ENCODE measurements at regions of chr3 and their contacts with region 1.

Region 1: DNA sequence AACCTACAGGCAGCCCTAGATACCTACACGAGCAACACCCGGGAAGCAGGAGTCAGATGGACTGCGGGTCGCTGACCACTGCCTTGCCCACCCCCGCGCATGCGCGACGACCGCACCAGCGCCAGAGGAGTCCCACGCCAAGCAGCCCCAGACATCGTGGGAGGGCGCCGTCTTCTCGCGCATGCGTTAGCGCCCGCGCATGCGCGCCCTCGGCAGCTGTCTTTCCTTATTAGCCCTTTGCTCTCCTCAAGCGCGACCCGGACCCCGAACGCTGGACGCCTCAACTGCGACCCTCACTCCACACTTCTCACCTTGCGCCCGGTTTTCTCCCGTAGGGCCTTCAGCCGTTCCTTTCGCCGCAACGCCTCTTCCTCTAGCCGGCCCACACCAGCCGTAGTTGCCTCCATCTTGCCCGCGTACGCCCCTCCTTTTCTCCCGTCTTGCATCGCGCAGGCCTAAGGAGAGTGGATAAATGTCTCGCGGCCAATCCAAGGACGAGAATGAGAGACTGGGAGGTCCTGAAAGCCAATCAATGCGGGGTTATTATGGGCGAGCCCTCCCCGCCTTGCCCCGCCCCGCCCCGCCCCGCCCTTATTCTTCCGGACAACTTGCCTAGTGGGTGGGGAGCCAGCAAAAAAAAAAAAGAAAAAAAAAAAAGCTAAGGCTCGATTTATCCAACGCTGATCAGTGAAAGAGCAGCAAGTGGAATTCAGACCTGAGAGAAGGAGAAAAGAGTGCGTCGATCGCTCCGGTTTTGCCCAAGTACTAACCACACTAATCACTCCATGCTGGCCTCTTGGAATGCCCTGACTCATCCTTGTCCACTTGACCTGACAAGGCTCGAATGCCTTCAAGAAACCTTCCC is at the start of gene CCDC12:
- DNase-seq: peak; percentile 97 to 98 (median 98)
- H3K4me3 ChIP-seq: peak within 1 kb of the TSS; percentile 67 to 99
- H3K4me3 Mint-ChIP-seq: peak within 1 kb of the TSS; percentile 94 to 100 (median 100)
- H3K27ac ChIP-seq: peak within 1 kb of the TSS; percentile 89
- H3K27ac Mint-ChIP-seq: peak within 1 kb of the TSS; percentile 90 to 100 (median 99)
- H3K4me1 ChIP-seq: peaks cover 75% of the 10 kb centered on the region
- H3K4me1 Mint-ChIP-seq: peaks cover 45 to 78% (median 62%) of the 10 kb centered on the region in 4 donors
- H3K27me3 ChIP-seq: no peaks in the 10 kb centered on the region
- H3K27me3 Mint-ChIP-seq: no peaks in the 10 kb centered on the region
- total RNA-seq, gene CCDC12: 59.3 to 59.4 TPM

Region 2: DNA sequence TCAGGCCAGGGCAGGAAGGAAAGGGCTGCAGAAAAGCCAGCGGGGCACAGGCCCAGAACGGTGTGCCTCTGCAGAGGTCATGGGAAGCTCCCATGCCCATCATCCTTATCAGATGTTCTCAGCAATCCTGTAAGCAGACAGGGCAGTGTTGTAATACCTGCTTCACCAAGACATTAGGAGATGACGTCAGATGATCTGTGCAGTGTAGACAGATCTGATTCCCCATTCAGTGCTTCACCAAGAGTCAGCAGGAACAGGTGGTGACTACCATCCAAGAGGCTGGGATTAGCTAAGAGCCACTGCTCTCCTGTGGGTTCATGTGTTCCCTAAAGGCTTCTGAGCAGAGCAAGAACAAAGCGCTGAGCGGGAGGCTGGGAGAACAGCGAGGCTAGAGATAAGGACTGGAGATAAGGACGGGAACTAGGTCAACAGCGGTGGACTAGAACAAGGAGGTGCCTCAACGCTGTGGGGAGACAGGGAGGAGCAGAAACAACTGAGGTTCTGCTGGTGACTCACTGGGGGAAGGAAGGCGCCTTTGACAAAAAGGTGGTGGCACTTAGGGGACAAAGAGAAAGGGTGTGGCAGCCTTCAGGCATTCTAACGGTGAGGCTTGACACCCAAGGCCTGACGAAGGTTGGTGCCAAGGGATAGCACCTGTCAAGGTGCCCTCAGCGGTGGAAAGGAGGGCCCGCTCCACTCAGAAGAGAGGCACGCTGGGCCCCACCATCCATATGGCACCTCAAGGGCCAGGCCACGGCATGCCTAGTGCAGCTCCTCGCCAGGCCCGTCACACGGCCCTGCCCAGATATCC is 28.4 kb before region 1 on chr3:
- CTCF ChIA-PET with region 1: interaction called, 5 read pairs
- POLR2A ChIA-PET with region 1: interaction called, 116 read pairs
- intact Hi-C with region 1: loop called (anchors 1 kb)
- DNase-seq: peak; percentile 73 to 97 (median 83)
- H3K4me3 ChIP-seq: peak overlapping the region in 1 of 2 donors; percentile 13
- H3K4me3 Mint-ChIP-seq: peak overlapping the region; percentile 56 to 85 (median 78)
- H3K27ac ChIP-seq: peak overlapping the region; percentile 69
- H3K27ac Mint-ChIP-seq: peak overlapping the region; percentile 95 to 99 (median 97)
- H3K4me1 ChIP-seq: peaks cover 88% of the 10 kb centered on the region
- H3K4me1 Mint-ChIP-seq: peaks cover 70 to 94% (median 80%) of the 10 kb centered on the region in 4 donors
- H3K27me3 ChIP-seq: no peaks in the 10 kb centered on the region
- H3K27me3 Mint-ChIP-seq: no peaks in the 10 kb centered on the region

Region 3: DNA sequence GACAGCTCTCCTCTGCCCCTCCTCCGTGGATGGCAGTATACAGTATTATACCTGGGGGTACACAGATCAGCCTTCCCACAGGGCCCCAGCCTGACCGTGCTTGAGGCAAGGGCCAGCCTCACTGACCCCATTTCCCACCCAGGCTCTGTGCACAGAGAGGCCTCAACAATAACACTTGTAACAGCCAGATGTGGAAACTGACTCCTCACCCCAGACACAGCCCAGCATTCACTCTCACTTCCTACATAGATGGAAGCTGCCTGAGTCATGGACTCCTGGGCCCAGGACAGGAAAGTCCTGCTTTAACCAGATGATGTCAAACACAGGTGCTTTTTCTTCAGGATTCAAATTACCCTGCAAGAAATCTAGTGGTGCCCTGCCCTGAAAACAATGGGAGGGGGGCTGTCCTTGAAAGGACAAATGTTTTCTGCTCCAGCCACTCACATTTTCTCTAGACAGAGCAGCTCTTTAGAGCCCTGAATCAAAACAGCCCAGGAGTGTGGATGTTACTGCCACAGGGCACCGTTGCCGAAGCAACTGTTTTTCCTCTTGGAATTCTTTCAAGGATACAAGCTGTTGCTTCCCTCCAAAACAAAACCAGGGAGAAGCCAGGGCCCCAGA is 16.4 kb before region 1 on chr3:
- CTCF ChIA-PET with region 1: interaction called, 9 read pairs
- POLR2A ChIA-PET with region 1: interaction called, 18 read pairs
- intact Hi-C with region 1: no loop called
- DNase-seq: no peak
- H3K4me3 ChIP-seq: no peak overlapping the region
- H3K4me3 Mint-ChIP-seq: peak overlapping the region in 7 of 8 donors; percentile 29 to 79 (median 57)
- H3K27ac ChIP-seq: peak overlapping the region; percentile 24
- H3K27ac Mint-ChIP-seq: peak overlapping the region in 6 of 7 donors; percentile 7 to 92 (median 85)
- H3K4me1 ChIP-seq: peaks cover 74% of the 10 kb centered on the region
- H3K4me1 Mint-ChIP-seq: peaks cover 61 to 81% (median 70%) of the 10 kb centered on the region in 4 donors
- H3K27me3 ChIP-seq: no peaks in the 10 kb centered on the region
- H3K27me3 Mint-ChIP-seq: no peaks in the 10 kb centered on the region

Region 4: DNA sequence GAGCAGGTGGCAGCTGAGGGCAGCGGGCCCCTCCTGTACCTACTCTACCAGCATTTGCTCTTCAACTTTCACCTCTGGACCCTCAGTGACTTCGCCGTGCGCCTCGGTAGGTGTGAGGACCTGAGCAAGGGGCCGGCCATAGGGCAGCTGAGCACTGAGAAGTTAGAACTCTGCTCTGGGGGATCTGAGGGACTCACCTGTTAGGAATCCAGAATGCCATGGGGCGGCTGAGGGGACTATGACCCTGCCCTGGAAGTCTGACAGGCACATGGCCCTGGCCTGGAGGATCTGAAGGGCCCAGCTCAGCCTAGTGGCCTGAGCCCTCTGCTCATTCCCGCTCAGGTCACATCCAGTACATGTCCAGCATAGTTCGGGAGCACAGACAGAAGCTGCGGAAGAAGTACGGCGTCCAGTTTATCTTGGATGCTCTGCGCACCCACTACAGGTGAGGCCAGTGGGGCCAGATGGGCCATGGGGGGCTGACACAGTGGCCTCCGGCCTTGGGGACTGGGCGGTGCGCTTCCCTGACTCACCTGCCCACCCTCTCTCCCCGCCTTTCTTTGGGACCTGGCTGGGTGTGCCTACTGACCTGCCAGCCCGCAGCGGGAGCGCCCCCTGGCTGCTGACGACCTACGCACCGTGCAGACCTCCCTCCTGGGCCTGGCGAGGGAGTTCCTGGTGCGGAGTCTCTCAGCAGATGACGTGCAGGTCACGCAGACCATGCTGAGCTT is 21.7 kb after region 1 on chr3:
- CTCF ChIA-PET with region 1: interaction called, 28 read pairs
- POLR2A ChIA-PET with region 1: interaction called, 222 read pairs
- intact Hi-C with region 1: loop called (anchors 1 kb)
- DNase-seq: peak; percentile 65 to 73 (median 69)
- H3K4me3 ChIP-seq: no peak overlapping the region
- H3K4me3 Mint-ChIP-seq: no peak overlapping the region
- H3K27ac ChIP-seq: no peak overlapping the region
- H3K27ac Mint-ChIP-seq: peak overlapping the region; percentile 65 to 90 (median 85)
- H3K4me1 ChIP-seq: peaks cover 23% of the 10 kb centered on the region
- H3K4me1 Mint-ChIP-seq: peaks cover 11 to 29% (median 19%) of the 10 kb centered on the region in 4 donors
- H3K27me3 ChIP-seq: no peaks in the 10 kb centered on the region
- H3K27me3 Mint-ChIP-seq: no peaks in the 10 kb centered on the region

Region 5: GRCh38 chr3:47016934-47017435 is 40.4 kb after region 1 on chr3:
- CTCF ChIA-PET with region 1: no interaction called
- POLR2A ChIA-PET with region 1: no interaction called
- intact Hi-C with region 1: no loop called
- DNase-seq: peak in 3 of 5 donors; percentile 17 to 57 (median 18)
- H3K4me3 ChIP-seq: no peak overlapping the region
- H3K4me3 Mint-ChIP-seq: peak overlapping the region in 2 of 8 donors; percentile 5 to 30
- H3K27ac ChIP-seq: peak overlapping the region; percentile 26
- H3K27ac Mint-ChIP-seq: peak overlapping the region; percentile 73 to 91 (median 86)
- H3K4me1 ChIP-seq: peaks cover 21% of the 10 kb centered on the region
- H3K4me1 Mint-ChIP-seq: peaks cover 24 to 52% (median 31%) of the 10 kb centered on the region in 4 donors
- H3K27me3 ChIP-seq: no peaks in the 10 kb centered on the region
- H3K27me3 Mint-ChIP-seq: no peaks in the 10 kb centered on the region

Region 6: GRCh38 chr3:47057212-47057671 is 80.7 kb after region 1 on chr3:
- CTCF ChIA-PET with region 1: no interaction called
- POLR2A ChIA-PET with region 1: no interaction called
- intact Hi-C with region 1: loop called (anchors 5 kb)
- DNase-seq: peak; percentile 79 to 87 (median 83)
- H3K4me3 ChIP-seq: no peak overlapping the region
- H3K4me3 Mint-ChIP-seq: peak overlapping the region; percentile 21 to 75 (median 54)
- H3K27ac ChIP-seq: peak overlapping the region; percentile 50
- H3K27ac Mint-ChIP-seq: peak overlapping the region; percentile 85 to 97 (median 95)
- H3K4me1 ChIP-seq: peaks cover 32% of the 10 kb centered on the region
- H3K4me1 Mint-ChIP-seq: peaks cover 30 to 49% (median 38%) of the 10 kb centered on the region in 4 donors
- H3K27me3 ChIP-seq: no peaks in the 10 kb centered on the region
- H3K27me3 Mint-ChIP-seq: no peaks in the 10 kb centered on the region

Region 7: DNA sequence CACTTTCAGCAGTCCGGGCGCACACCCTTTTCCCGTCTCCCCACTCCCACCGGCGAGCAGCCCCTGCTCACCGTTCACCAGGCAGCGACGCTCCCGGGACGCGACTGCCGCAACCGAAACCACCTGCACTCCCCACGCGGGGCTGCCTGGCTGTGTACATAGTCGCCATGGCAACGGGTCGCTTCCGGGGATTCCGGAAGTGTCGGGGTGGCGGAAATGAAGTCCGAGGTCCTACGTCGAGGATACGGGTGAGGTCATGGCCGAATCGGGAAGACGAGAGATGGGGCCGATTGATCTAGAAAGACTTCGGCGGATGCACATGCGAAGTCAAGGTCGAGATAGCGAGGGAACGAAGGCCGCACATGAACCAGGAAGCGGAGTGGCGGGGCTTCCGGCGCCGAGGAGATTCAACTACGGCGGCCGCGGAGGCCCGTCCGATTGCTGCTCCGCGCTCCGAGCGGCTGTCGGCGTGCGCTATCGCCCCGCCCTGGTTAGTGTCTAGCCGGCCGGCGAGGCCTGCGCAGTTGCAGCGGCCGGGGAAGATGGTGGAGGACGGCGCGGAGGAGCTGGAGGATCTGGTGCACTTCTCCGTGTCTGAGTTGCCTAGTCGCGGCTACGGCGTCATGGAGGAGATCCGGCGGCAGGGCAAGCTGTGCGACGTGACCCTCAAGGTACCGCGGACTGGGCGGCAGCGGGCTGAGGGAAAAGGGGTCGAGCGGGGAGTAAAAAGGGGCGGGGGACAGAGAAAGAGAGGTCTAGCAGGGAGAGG is 306.1 kb after region 1 on chr3 and contains the starts of genes KIF9 and KLHL18:
- CTCF ChIA-PET with region 1: no interaction called
- POLR2A ChIA-PET with region 1: no interaction called
- intact Hi-C with region 1: loop called (anchors 1 kb)
- DNase-seq: peak; percentile 97 to 98 (median 98)
- H3K4me3 ChIP-seq: peak within 1 kb of the TSS; percentile 94 to 99
- H3K4me3 Mint-ChIP-seq: peak within 1 kb of the TSS; percentile 95 to 100 (median 98)
- H3K27ac ChIP-seq: peak within 1 kb of the TSS; percentile 95
- H3K27ac Mint-ChIP-seq: peak within 1 kb of the TSS; percentile 98 to 100 (median 100)
- H3K4me1 ChIP-seq: peaks cover 40% of the 10 kb centered on the region
- H3K4me1 Mint-ChIP-seq: peaks cover 19 to 54% (median 38%) of the 10 kb centered on the region in 4 donors
- H3K27me3 ChIP-seq: no peaks in the 10 kb centered on the region
- H3K27me3 Mint-ChIP-seq: no peaks in the 10 kb centered on the region
- total RNA-seq, gene KIF9: 2.3 to 3.2 TPM
- total RNA-seq, gene KLHL18: 21.8 to 26.7 TPM